Heart right ventricle (tissue), 16 donors: ENCODE measurements at regions of chr6 and their contacts with region 1.

Region 1: DNA sequence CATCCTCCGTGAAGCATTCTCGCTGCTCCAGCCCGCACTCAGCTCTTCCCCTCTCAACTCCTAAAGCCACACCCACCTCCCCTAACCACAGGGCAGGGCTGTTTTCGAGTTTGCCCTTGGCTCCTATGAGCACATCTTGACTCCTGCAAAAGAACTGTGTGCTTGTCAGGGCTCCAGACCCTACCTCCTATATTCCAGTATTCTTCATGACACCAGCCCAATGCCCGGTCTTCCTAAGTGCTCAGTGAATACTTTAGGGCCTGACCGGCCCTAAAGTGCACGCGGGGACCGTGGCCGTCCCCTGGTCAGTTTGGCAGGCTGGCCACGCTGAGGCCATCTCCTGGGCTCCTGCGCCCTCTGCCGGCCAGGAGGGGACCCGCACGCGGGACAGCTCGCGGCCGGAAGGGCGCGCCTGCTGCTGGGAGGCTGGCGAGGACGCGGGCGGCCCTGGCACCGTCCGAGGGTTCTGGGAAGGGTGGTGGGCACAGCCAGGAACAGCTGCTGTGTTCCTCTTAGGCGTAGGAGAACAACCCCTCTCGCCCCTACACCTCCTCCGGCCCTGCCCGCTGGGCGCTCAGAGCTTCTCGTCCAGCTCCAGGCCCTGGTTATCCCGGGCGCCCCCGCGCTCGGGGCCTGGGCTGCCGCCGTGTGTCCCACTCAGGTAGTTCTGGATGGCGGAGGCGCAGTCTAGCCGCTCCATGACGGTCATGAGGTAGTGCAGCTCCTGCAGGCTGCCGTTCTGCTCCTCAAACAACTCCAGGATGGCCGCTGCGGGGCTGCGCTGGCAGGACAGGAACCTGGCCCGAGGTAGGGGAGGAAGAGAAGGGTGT is 11.0 kb downstream of the UNC5CL start:
- DNase-seq: peak; percentile 81 to 90
- ATAC-seq: peak; percentile 95 to 97 (median 96)
- H3K4me3 ChIP-seq: peak overlapping the region; percentile 40 to 66 (median 60)
- H3K27ac ChIP-seq: peak overlapping the region; percentile 27 to 86 (median 78)
- H3K4me1 ChIP-seq: peaks cover 3 to 26% (median 10%) of the 10 kb centered on the region in 9 donors
- H3K27me3 ChIP-seq: no peaks in the 10 kb centered on the region
- CTCF ChIP-seq: peak; percentile 93 to 100 (median 100)

Region 2: GRCh38 chr6:39347906-39348585 is 1680.0 kb before region 1 on chr6:
- intact Hi-C with region 1: loop called in 2 of 10 experiments (anchors 10 kb)
- DNase-seq: peak; percentile 63 to 70
- ATAC-seq: peak; percentile 45 to 79 (median 72)
- H3K4me3 ChIP-seq: no peak overlapping the region
- H3K27ac ChIP-seq: no peak overlapping the region
- H3K4me1 ChIP-seq: peaks cover 0 to 8% (median 0%) of the 10 kb centered on the region in 9 donors
- H3K27me3 ChIP-seq: no peaks in the 10 kb centered on the region
- CTCF ChIP-seq: peak; percentile 64 to 93 (median 89)

Region 3: DNA sequence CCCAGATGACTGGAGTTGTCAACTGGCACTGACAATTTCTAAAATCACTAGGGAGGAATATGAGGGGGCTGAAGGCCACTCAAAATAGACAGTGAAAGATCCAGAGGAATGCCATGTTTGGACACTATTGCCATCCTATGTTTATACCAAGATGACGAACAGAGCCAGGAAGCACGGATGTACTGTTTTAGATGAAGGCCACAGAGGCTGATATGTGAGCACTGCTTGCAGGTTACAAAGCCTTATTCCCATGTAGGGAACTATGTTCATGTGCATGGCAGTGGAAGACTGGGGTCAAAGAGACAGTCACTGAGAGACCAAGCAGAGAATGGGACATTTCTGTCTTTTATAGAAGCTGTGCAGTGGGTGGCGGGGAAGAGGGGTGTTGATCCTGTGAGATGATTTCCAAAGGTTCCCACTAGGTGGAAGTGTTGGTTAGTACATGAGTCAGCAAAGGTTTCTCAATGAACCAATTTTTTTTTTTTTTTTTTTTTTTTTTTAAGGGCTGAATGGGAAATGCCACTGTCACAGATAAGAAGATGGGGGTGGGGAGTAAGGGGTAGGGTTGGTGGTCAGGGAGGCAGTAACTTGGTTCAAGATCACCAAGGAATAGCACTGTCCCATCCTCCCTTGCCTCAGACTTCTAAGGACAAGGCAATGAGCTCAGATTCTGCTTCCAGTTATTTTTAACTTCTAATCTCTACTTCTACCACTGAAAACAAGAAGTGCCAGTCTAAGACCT is 1047.0 kb before region 1 on chr6:
- intact Hi-C with region 1: loop called in 6 of 10 experiments (anchors 5 to 10 kb)
- DNase-seq: peak in 1 of 2 donors; percentile 47
- ATAC-seq: peak; percentile 50 to 85 (median 78)
- H3K4me3 ChIP-seq: no peak overlapping the region
- H3K27ac ChIP-seq: peak overlapping the region in 4 of 10 donors; percentile 10 to 31 (median 22)
- H3K4me1 ChIP-seq: peaks cover 0 to 23% (median 4%) of the 10 kb centered on the region in 9 donors
- H3K27me3 ChIP-seq: peaks cover 0 to 5% (median 0%) of the 10 kb centered on the region in 7 donors
- CTCF ChIP-seq: peak in 8 of 9 donors; percentile 18 to 64 (median 49)

Region 4: GRCh38 chr6:40845553-40845952 is 182.5 kb before region 1 on chr6:
- intact Hi-C with region 1: loop called in 1 of 10 experiments (anchors 5 kb)
- DNase-seq: peak in 1 of 2 donors; percentile 35
- ATAC-seq: peak in 1 of 8 donors; percentile 29
- H3K4me3 ChIP-seq: no peak overlapping the region
- H3K27ac ChIP-seq: no peak overlapping the region
- H3K4me1 ChIP-seq: peaks cover 0 to 14% (median 0%) of the 10 kb centered on the region in 9 donors
- H3K27me3 ChIP-seq: peaks cover 0 to 28% (median 12%) of the 10 kb centered on the region in 7 donors
- CTCF ChIP-seq: peak; percentile 8 to 63 (median 52)

Region 5: DNA sequence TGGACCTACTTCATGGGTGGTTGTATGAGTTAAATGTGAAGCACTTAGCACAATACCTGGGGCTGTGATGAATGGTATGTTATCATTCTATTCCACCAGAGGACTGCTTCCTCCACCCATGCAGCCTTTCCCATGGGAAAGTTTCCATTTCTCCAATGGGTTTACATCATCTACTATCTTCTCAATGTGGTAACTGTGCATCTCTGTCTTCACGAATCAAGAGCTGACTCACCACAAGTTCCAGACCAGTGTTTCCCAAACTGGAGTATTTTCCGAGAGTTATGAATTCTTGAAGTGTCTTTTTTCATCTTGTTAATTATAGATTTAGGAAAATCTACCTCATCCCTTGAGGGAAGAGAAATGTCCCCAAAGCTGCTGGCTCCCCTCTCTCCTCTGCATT is 171.7 kb before region 1 on chr6:
- intact Hi-C with region 1: no loop called
- DNase-seq: no peak
- ATAC-seq: no peak
- H3K4me3 ChIP-seq: no peak overlapping the region
- H3K27ac ChIP-seq: no peak overlapping the region
- H3K4me1 ChIP-seq: no peaks in the 10 kb centered on the region
- H3K27me3 ChIP-seq: peaks cover 0 to 23% (median 0%) of the 10 kb centered on the region in 7 donors
- CTCF ChIP-seq: no peak

Region 6: GRCh38 chr6:40999569-40999968 is 28.4 kb before region 1 on chr6:
- intact Hi-C with region 1: loop called in 1 of 10 experiments (anchors 2 kb)
- DNase-seq: peak; percentile 43 to 64
- ATAC-seq: peak; percentile 60 to 91 (median 73)
- H3K4me3 ChIP-seq: no peak overlapping the region
- H3K27ac ChIP-seq: peak overlapping the region in 2 of 10 donors; percentile 74 to 82
- H3K4me1 ChIP-seq: peaks cover 0 to 38% (median 14%) of the 10 kb centered on the region in 9 donors
- H3K27me3 ChIP-seq: peaks cover 0 to 13% (median 0%) of the 10 kb centered on the region in 7 donors
- CTCF ChIP-seq: peak in 7 of 9 donors; percentile 38 to 59 (median 53)

Region 7: DNA sequence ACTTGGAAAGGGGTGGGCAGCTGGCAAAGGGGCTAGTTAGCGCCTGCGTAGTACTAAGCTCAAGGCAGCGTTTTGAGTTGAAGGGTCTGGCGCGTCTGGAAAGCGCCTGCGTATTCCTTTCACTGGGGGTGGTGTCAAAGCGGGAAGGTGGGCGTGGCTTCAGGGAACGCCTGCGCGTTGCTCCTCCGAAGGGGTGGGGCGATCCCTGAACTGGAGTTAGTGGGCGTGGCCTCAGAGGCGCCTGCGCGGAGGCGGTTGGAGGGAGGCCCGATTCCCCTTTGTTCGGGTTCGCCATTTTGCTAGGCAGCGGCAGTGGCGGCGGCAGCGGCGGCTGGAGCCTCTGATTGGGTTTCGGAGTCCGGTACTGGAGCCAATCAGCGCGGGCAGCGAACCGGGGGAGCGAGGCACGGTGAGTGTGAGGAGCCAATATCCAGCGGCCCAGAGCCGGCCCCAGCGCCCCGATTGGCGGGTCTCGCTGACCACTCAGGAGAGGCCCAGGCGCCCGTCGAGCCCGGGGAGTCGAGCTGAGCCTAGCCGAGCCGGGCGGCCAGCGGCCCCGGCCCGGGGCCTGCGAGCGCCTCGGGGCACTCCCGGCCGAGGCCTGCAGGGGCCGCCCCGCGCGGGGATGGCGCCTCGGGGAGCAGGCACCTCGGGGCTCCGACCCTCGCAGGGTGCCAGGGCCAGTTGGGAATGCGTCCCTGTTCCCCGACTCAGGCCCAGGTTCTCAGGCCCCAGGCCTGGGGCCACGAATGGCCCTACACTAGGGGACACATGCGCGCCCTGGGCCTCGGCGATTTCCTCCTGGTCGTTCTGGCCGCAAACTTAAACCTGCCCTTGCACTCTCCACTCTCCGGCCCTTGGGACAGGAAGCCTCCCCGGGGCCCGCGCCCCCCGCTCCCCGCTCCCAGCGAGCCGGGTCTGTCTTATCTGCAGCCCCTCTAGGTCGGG is 44.9 kb after region 1 on chr6 and contains the start of gene NFYA:
- intact Hi-C with region 1: loop called in 2 of 10 experiments (anchors 2 to 5 kb)
- DNase-seq: peak; percentile 100
- ATAC-seq: peak; percentile 80 to 91 (median 83)
- H3K4me3 ChIP-seq: peak within 1 kb of the TSS; percentile 84 to 98 (median 92)
- H3K27ac ChIP-seq: peak within 1 kb of the TSS; percentile 98 to 100 (median 100)
- H3K4me1 ChIP-seq: peaks cover 6 to 43% (median 38%) of the 10 kb centered on the region in 9 donors
- H3K27me3 ChIP-seq: no peaks in the 10 kb centered on the region
- CTCF ChIP-seq: peak in 7 of 9 donors; percentile 19 to 53 (median 36)
- total RNA-seq, gene NFYA: 8.9 to 12.0 (median 10.5) TPM